Pancreas (tissue), 10 donors: ENCODE measurements at regions of chr1 and their contacts with region 1.

Region 1: DNA sequence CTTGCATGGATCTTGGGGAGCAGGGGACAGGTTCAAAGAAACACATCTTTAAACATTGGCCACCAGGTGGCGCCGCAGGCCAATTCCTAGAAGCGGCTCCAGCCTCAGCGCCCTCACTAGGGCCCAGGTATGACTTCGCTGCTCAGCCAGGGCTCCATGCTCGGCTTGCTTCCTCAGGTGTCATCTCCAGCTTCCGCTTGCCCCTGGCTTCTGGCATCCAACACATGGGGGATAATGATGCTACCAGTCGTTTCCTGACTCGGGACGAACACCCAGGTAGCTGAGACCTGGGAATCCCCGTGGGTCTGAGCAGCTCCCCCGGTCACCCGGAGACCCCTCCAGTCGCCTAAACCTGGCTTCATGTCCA is 8.5 kb upstream of the MEX3A start:
- DNase-seq: peak; percentile 77 to 96 (median 90)
- ATAC-seq: peak; percentile 87 to 94 (median 93)
- H3K4me3 ChIP-seq: no peak overlapping the region
- H3K27ac ChIP-seq: peak overlapping the region in 1 of 4 donors; percentile 28
- H3K4me1 ChIP-seq: no peaks in the 10 kb centered on the region
- H3K27me3 ChIP-seq: no peaks in the 10 kb centered on the region
- CTCF ChIP-seq: peak; percentile 73 to 84 (median 78)

Region 2: GRCh38 chr1:156136970-156137483 is 46.2 kb after region 1 on chr1:
- intact Hi-C with region 1: loop called in 2 of 3 experiments (anchors 5 to 10 kb)
- DNase-seq: no peak
- ATAC-seq: no peak
- H3K4me3 ChIP-seq: no peak overlapping the region
- H3K27ac ChIP-seq: no peak overlapping the region
- H3K4me1 ChIP-seq: no peaks in the 10 kb centered on the region
- H3K27me3 ChIP-seq: no peaks in the 10 kb centered on the region
- CTCF ChIP-seq: no peak

Region 3: GRCh38 chr1:156233426-156234127 is 142.8 kb after region 1 on chr1:
- intact Hi-C with region 1: no loop called
- DNase-seq: no peak
- ATAC-seq: no peak
- H3K4me3 ChIP-seq: no peak overlapping the region
- H3K27ac ChIP-seq: no peak overlapping the region
- H3K4me1 ChIP-seq: no peaks in the 10 kb centered on the region
- H3K27me3 ChIP-seq: no peaks in the 10 kb centered on the region
- CTCF ChIP-seq: no peak

Region 4: GRCh38 chr1:156524481-156524869 is 433.7 kb after region 1 on chr1:
- intact Hi-C with region 1: no loop called
- DNase-seq: no peak
- ATAC-seq: no peak
- H3K4me3 ChIP-seq: no peak overlapping the region
- H3K27ac ChIP-seq: no peak overlapping the region
- H3K4me1 ChIP-seq: no peaks in the 10 kb centered on the region
- H3K27me3 ChIP-seq: no peaks in the 10 kb centered on the region
- CTCF ChIP-seq: no peak